ENCODE measurements at regions of chr20 and their contacts with region 1.

Region 1: GRCh38 chr20:50695135-50695872 is 4.0 kb upstream of the RIPOR3 start:
- DNase-seq: no peak
- H3K4me3 Mint-ChIP-seq: no peak overlapping the region
- H3K27ac Mint-ChIP-seq: no peak overlapping the region
- H3K4me1 Mint-ChIP-seq: peaks cover 9% of the 10 kb centered on the region
- H3K27me3 Mint-ChIP-seq: no peaks in the 10 kb centered on the region
- CTCF ChIP-seq: no peak

Region 2: GRCh38 chr20:50635667-50636503 is 59.4 kb before region 1 on chr20:
- CTCF ChIA-PET with region 1: no interaction called
- intact Hi-C with region 1: no loop called
- DNase-seq: peak; percentile 96
- H3K4me3 Mint-ChIP-seq: peak overlapping the region; percentile 15
- H3K27ac Mint-ChIP-seq: peak overlapping the region; percentile 48
- H3K4me1 Mint-ChIP-seq: peaks cover 39% of the 10 kb centered on the region
- H3K27me3 Mint-ChIP-seq: no peaks in the 10 kb centered on the region
- CTCF ChIP-seq: peak; percentile 99

Region 3: GRCh38 chr20:50680412-50680908 is 14.8 kb before region 1 on chr20:
- CTCF ChIA-PET with region 1: interaction called, 10 read pairs
- intact Hi-C with region 1: no loop called
- DNase-seq: peak; percentile 83
- H3K4me3 Mint-ChIP-seq: peak overlapping the region; percentile 62
- H3K27ac Mint-ChIP-seq: peak overlapping the region; percentile 84
- H3K4me1 Mint-ChIP-seq: peaks cover 48% of the 10 kb centered on the region
- H3K27me3 Mint-ChIP-seq: no peaks in the 10 kb centered on the region
- CTCF ChIP-seq: no peak

Region 4: DNA sequence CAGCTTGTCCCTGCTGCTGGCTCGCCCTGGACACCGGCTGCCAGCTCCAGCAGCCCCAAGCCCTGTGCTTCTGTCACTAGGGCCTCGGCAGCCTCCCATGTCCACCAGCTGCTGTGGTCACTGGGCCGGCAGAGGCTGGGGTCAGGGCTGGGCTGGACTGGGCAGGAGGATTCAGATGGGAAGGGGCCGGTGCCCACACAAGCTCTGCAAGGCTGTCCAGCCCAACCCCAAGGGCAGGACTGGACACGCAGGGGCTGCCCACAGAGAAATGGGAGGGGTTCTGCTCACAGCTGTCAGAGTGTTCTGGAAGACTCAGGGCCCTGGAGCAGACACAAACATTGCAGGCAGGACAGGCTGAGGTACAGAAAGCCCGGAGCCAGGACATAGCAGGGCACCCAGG is 170.3 kb after region 1 on chr20:
- CTCF ChIA-PET with region 1: no interaction called
- intact Hi-C with region 1: no loop called
- DNase-seq: no peak
- H3K4me3 Mint-ChIP-seq: no peak overlapping the region
- H3K27ac Mint-ChIP-seq: no peak overlapping the region
- H3K4me1 Mint-ChIP-seq: peaks cover 18% of the 10 kb centered on the region
- H3K27me3 Mint-ChIP-seq: no peaks in the 10 kb centered on the region
- CTCF ChIP-seq: no peak

Region 5: GRCh38 chr20:51318058-51318895 is 623.0 kb after region 1 on chr20:
- CTCF ChIA-PET with region 1: no interaction called
- intact Hi-C with region 1: no loop called
- DNase-seq: peak; percentile 69
- H3K4me3 Mint-ChIP-seq: no peak overlapping the region
- H3K27ac Mint-ChIP-seq: no peak overlapping the region
- H3K4me1 Mint-ChIP-seq: peaks cover 3% of the 10 kb centered on the region
- H3K27me3 Mint-ChIP-seq: peaks cover 43% of the 10 kb centered on the region
- CTCF ChIP-seq: peak; percentile 81

Measured in Calu3 (cell line).